PC-9 (cell line): ENCODE measurements at regions of chr22 and their contacts with region 1.

Region 1: GRCh38 chr22:27405672-27406388 is 395.7 kb downstream of the MN1 start:
- DNase-seq: peak in 1 of 2 experiments; percentile 64
- H3K4me3 ChIP-seq: no peak overlapping the region
- H3K27ac ChIP-seq: no peak overlapping the region
- H3K4me1 ChIP-seq: no peaks in the 10 kb centered on the region
- H3K27me3 ChIP-seq: no peaks in the 10 kb centered on the region
- CTCF ChIP-seq: peak; percentile 88

Region 2: DNA sequence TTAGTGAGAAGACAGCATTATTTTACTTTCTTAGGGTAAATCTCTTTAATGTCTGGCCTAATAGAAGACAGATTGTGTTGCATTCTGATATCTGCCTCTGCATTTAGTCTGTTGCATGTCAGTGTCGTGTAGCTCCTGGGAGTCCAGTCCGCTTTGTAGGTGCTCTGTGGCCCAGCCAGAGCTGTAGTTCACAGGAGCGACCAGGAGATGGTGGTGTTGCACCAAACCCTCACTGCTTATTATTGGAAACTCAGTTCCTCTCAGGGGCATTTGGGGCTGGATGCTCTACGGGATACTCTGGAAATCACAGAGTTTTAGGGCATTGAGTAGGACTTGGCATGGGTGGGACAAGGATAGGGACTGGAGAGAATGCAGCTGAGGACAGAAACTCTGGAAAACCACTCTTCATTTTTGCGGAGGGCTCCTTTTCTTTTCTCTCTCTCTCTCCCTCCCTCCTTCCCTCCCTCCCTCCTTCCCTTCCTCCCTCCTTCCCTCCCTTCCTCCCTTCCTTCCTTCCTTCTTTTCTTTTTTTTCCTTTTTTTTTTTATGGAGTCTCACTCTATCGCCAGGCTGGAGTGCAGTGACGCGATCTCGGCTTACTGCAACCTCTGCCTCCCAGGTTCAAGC is 726.7 kb before region 1 on chr22:
- CTCF ChIA-PET with region 1: interaction called, 21 read pairs
- POLR2A ChIA-PET with region 1: no interaction called
- intact Hi-C with region 1: no loop called
- DNase-seq: peak; percentile 57 to 60
- H3K4me3 ChIP-seq: no peak overlapping the region
- H3K27ac ChIP-seq: no peak overlapping the region
- H3K4me1 ChIP-seq: peaks cover 8% of the 10 kb centered on the region
- H3K27me3 ChIP-seq: no peaks in the 10 kb centered on the region
- CTCF ChIP-seq: peak; percentile 90

Region 3: GRCh38 chr22:26822299-26822698 is 583.5 kb before region 1 on chr22:
- CTCF ChIA-PET with region 1: interaction called, 10 read pairs
- POLR2A ChIA-PET with region 1: no interaction called
- intact Hi-C with region 1: no loop called
- DNase-seq: no peak
- H3K4me3 ChIP-seq: no peak overlapping the region
- H3K27ac ChIP-seq: no peak overlapping the region
- H3K4me1 ChIP-seq: no peaks in the 10 kb centered on the region
- H3K27me3 ChIP-seq: 0 out of 2 replicates have a peak, but pooled peaks cover 4% of the 10 kb centered on the region
- CTCF ChIP-seq: no peak

Region 4: GRCh38 chr22:27391092-27391770 is 14.6 kb before region 1 on chr22:
- CTCF ChIA-PET with region 1: no interaction called
- POLR2A ChIA-PET with region 1: no interaction called
- intact Hi-C with region 1: no loop called
- DNase-seq: no peak
- H3K4me3 ChIP-seq: no peak overlapping the region
- H3K27ac ChIP-seq: no peak overlapping the region
- H3K4me1 ChIP-seq: no peaks in the 10 kb centered on the region
- H3K27me3 ChIP-seq: no peaks in the 10 kb centered on the region
- CTCF ChIP-seq: no peak

Region 5: GRCh38 chr22:27420817-27421361 is 15.1 kb after region 1 on chr22:
- CTCF ChIA-PET with region 1: interaction called, 18 read pairs
- POLR2A ChIA-PET with region 1: no interaction called
- intact Hi-C with region 1: no loop called
- DNase-seq: peak in 1 of 2 experiments; percentile 44
- H3K4me3 ChIP-seq: no peak overlapping the region
- H3K27ac ChIP-seq: no peak overlapping the region
- H3K4me1 ChIP-seq: no peaks in the 10 kb centered on the region
- H3K27me3 ChIP-seq: no peaks in the 10 kb centered on the region
- CTCF ChIP-seq: no peak

Region 6: GRCh38 chr22:27483095-27483785 is 77.4 kb after region 1 on chr22:
- CTCF ChIA-PET with region 1: interaction called, 12 read pairs
- POLR2A ChIA-PET with region 1: no interaction called
- intact Hi-C with region 1: no loop called
- DNase-seq: no peak
- H3K4me3 ChIP-seq: no peak overlapping the region
- H3K27ac ChIP-seq: no peak overlapping the region
- H3K4me1 ChIP-seq: peaks cover 9% of the 10 kb centered on the region
- H3K27me3 ChIP-seq: no peaks in the 10 kb centered on the region
- CTCF ChIP-seq: no peak

Region 7: DNA sequence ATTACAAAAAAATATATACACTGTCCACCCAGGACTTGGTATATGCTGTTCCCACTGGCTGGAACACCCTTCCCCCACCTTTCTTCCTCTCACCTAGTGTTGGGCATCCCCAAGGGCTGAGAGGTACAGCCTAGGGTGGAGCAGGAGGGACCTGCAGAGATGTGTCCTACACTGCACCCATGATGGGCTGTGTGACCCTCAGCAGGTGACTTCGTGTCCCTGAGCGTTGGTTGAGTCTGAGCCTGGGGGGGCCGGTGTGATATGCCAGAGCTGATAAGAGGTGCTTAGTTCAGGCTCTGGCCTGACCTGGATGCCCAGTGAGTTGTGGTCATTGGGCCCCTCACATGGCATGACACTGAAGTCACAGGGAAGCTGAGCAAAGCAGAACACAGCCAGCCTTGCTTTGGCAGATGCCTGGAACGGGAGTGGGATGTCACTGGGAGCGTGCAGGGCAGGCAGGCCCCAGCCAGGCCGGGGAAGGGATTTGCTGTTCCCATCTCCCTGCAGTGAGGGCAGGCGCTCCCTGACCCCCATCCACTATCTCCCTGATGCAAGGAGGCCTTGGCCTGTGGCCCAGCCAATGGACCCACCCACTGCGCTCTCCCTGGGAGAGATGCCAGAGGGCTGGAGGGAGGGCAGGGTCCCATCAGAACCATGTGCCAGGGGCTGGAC is 256.7 kb after region 1 on chr22:
- CTCF ChIA-PET with region 1: interaction called, 14 read pairs
- POLR2A ChIA-PET with region 1: no interaction called
- intact Hi-C with region 1: loop called (anchors 5 kb)
- DNase-seq: peak in 1 of 2 experiments; percentile 72
- H3K4me3 ChIP-seq: no peak overlapping the region
- H3K27ac ChIP-seq: peak overlapping the region; percentile 89
- H3K4me1 ChIP-seq: peaks cover 38% of the 10 kb centered on the region
- H3K27me3 ChIP-seq: no peaks in the 10 kb centered on the region
- CTCF ChIP-seq: no peak

Region 8: GRCh38 chr22:27668828-27669797 is 263.3 kb after region 1 on chr22:
- CTCF ChIA-PET with region 1: interaction called, 4 read pairs
- POLR2A ChIA-PET with region 1: no interaction called
- intact Hi-C with region 1: loop called (anchors 5 kb)
- DNase-seq: peak; percentile 87 to 94
- H3K4me3 ChIP-seq: peak overlapping the region; percentile 17; the same call in 1 of the 2 replicates
- H3K27ac ChIP-seq: peak overlapping the region; percentile 86
- H3K4me1 ChIP-seq: peaks cover 44% of the 10 kb centered on the region
- H3K27me3 ChIP-seq: no peaks in the 10 kb centered on the region
- CTCF ChIP-seq: no peak